GM13976 (cell line): ENCODE measurements at regions of chr3 and their contacts with region 1.

Region 1: GRCh38 chr3:150216041-150216811 is 191.9 kb upstream of the TSC22D2 start:
- DNase-seq: no peak
- CTCF ChIP-seq: no peak

Region 2: DNA sequence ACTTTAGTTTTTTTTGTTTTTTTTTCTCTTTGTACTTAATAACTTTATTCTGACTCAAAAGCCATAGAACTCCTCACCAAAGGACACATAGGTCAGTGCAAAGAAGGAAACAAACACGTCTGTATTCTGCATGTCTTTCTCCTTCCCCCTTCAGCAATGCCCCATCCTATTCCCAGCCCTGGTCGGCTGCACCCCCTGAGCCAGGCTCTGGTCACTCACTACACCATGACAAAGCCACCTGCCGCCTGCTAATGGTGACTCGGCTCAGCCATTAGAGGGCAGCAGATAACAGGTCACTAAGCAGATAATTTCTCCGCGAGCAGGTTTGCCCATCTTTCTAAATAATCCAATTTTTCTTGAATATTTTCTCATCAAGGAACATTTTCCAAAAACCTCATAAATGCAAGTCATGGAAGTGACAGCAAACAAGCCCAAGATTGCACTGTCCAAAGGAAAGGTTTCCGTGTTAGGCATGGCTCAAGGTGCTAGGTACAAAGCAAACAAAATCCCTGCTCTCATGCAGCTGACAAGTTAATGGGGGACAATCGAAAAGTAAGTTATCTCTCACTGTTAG is 703.9 kb before region 1 on chr3:
- in situ Hi-C with region 1: loop called (anchors 25 kb)
- DNase-seq: peak; percentile 67
- CTCF ChIP-seq: peak; percentile 78